ENCODE measurements at regions of chr12 and their contacts with region 1.

Region 1: GRCh38 chr12:47837190-47838171 is 17.8 kb upstream of the HDAC7 start:
- DNase-seq: peak in 1 of 2 experiments; percentile 86
- H3K4me3 ChIP-seq: no peak overlapping the region
- H3K27ac ChIP-seq: no peak overlapping the region
- H3K4me1 ChIP-seq: peaks cover 0 to 6% (median under 1%) of the 10 kb centered on the region in 4 experiments; a peak in 3 of 7 replicates
- H3K27me3 ChIP-seq: no peaks in the 10 kb centered on the region; a peak in 1 of 7 replicates
- CTCF ChIP-seq: peak; percentile 75 to 92 (median 83)
- EP300 ChIP-seq: no peak
- POLR2A ChIP-seq: no peak
- RAD21 ChIP-seq: peak; percentile 89 to 93

Region 2: DNA sequence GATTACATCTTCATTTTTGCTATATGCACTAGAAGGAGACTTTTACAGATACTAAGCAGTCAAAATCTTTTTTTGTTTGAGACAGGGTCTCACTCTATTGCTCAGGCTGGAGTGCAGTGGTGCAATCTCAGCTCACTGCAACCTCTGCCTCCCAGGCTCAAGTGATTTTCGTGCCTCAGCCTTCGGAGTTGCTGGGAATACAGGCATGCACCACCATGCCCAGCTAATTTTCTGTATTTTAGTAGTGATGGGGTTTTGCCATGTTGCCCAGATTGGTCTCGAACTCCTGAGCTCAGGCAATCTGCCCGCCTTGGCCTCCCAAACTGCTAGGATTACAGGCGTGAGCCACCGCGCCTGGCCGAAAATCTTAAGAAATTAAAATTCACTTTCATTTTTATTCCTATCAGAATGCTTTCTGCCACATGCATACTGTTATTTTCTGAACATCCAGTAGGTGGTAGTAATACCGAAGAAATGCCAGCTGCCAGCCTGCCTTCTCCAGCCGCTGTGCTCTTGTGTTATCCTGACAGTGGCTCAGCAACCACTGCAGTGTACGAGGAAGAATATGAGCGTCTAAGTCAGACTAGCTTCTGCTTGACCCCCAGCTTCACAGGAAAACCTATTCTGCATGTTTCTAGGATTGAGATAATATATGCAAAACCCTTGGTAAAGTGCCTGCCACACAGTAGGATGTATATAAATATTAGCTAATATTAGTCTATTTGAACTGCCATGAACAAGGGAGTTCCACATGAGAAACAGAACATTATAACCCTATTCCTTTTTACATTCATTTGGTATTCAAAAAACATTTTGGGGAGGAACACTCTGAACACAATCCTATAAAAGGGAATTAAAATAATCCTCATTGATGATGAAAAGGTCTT is 185.9 kb before region 1 on chr12:
- CTCF ChIA-PET with region 1: no interaction called
- POLR2A ChIA-PET with region 1: no interaction called
- DNase-seq: no peak
- H3K4me3 ChIP-seq: no peak overlapping the region
- H3K27ac ChIP-seq: no peak overlapping the region
- H3K4me1 ChIP-seq: peaks cover 2 to 6% (median 5%) of the 10 kb centered on the region in 4 experiments; a peak in 6 of 7 replicates
- H3K27me3 ChIP-seq: no peaks in the 10 kb centered on the region
- CTCF ChIP-seq: peak; percentile 27 to 75 (median 69)
- EP300 ChIP-seq: no peak
- POLR2A ChIP-seq: no peak
- RAD21 ChIP-seq: peak; percentile 79 to 82

Region 3: DNA sequence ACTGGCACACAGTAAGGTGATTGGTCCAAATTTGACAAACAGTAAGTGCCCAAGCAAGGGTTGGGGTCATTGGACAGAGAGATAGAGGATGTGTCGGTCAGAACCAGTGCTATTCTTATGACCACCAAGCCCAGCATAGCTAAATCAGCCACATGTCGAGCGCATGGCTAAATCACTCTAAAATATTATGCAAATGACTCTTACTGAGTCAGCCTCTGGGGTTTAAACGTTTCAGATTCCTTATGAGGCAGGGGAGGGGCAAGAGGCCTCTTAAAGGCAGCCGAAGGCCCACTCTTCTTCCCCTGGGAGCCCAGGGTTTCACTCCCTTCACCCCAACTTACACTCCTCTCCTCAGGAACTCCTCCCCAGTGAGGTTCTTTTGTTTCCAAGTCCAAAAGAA is 111.6 kb before region 1 on chr12:
- CTCF ChIA-PET with region 1: interaction called, 15 read pairs
- POLR2A ChIA-PET with region 1: no interaction called
- DNase-seq: no peak
- H3K4me3 ChIP-seq: no peak overlapping the region
- H3K27ac ChIP-seq: no peak overlapping the region
- H3K4me1 ChIP-seq: no peaks in the 10 kb centered on the region
- H3K27me3 ChIP-seq: no peaks in the 10 kb centered on the region
- CTCF ChIP-seq: no peak
- EP300 ChIP-seq: no peak
- POLR2A ChIP-seq: no peak
- RAD21 ChIP-seq: no peak

Region 4: GRCh38 chr12:47742253-47742825 is 95.1 kb before region 1 on chr12:
- CTCF ChIA-PET with region 1: interaction called, 296 read pairs
- POLR2A ChIA-PET with region 1: interaction called, 8 read pairs
- DNase-seq: peak in 1 of 2 experiments; percentile 97
- H3K4me3 ChIP-seq: no peak overlapping the region
- H3K27ac ChIP-seq: no peak overlapping the region
- H3K4me1 ChIP-seq: peaks cover 0 to 10% (median 2%) of the 10 kb centered on the region in 4 experiments; a peak in 4 of 7 replicates
- H3K27me3 ChIP-seq: no peaks in the 10 kb centered on the region
- CTCF ChIP-seq: peak in 2 of 3 experiments; percentile 93 to 98; a peak in 3 of 4 replicates
- EP300 ChIP-seq: no peak
- POLR2A ChIP-seq: no peak
- RAD21 ChIP-seq: peak; percentile 91 to 93

Region 5: DNA sequence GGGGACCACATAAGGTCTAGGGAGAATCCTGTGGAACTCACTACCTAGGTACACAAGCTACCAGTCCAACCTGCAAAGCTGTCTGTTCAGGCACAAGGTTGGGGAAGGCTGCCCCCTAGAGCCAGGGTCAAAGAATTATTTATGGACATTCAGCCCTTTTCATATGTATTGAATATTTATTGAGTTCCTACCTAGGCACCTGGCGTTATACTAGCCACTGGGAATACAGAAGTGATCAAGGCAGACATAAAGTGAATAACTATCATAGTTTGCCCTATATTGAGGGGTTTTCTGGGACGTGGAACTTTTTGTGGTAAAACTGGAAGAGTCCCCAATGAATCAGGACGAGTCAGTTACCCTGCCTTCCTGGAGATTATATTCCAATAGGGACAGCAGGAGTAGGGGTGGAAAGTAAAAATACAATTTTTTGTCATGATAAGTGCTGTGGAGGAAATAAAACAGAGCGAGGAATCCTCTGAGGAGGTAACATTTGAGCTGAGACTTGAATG is 70.2 kb before region 1 on chr12:
- CTCF ChIA-PET with region 1: interaction called, 2,001 read pairs
- POLR2A ChIA-PET with region 1: interaction called, 3 read pairs
- DNase-seq: peak in 1 of 2 experiments; percentile 77
- H3K4me3 ChIP-seq: no peak overlapping the region
- H3K27ac ChIP-seq: no peak overlapping the region
- H3K4me1 ChIP-seq: peaks cover 3 to 12% (median 9%) of the 10 kb centered on the region in 4 experiments; a peak in 5 of 7 replicates
- H3K27me3 ChIP-seq: no peaks in the 10 kb centered on the region; a peak in 1 of 7 replicates
- CTCF ChIP-seq: peak; percentile 63 to 89 (median 77)
- EP300 ChIP-seq: no peak
- POLR2A ChIP-seq: no peak
- RAD21 ChIP-seq: peak; percentile 83 to 87

Region 6: GRCh38 chr12:47812797-47813510 is 24.5 kb before region 1 on chr12:
- CTCF ChIA-PET with region 1: interaction called, 2,001 read pairs
- POLR2A ChIA-PET with region 1: interaction called, 480 read pairs
- DNase-seq: peak; percentile 81 to 83
- H3K4me3 ChIP-seq: peak overlapping the region; percentile 14 to 55 (median 40); a peak in 7 of 8 replicates
- H3K27ac ChIP-seq: peak overlapping the region; percentile 79
- H3K4me1 ChIP-seq: peaks cover 28 to 72% (median 58%) of the 10 kb centered on the region in 4 experiments
- H3K27me3 ChIP-seq: no peaks in the 10 kb centered on the region
- CTCF ChIP-seq: no peak
- EP300 ChIP-seq: peak in 1 of 2 experiments; percentile 77; a peak in 1 of 3 replicates
- POLR2A ChIP-seq: no peak
- RAD21 ChIP-seq: no peak

Region 7: DNA sequence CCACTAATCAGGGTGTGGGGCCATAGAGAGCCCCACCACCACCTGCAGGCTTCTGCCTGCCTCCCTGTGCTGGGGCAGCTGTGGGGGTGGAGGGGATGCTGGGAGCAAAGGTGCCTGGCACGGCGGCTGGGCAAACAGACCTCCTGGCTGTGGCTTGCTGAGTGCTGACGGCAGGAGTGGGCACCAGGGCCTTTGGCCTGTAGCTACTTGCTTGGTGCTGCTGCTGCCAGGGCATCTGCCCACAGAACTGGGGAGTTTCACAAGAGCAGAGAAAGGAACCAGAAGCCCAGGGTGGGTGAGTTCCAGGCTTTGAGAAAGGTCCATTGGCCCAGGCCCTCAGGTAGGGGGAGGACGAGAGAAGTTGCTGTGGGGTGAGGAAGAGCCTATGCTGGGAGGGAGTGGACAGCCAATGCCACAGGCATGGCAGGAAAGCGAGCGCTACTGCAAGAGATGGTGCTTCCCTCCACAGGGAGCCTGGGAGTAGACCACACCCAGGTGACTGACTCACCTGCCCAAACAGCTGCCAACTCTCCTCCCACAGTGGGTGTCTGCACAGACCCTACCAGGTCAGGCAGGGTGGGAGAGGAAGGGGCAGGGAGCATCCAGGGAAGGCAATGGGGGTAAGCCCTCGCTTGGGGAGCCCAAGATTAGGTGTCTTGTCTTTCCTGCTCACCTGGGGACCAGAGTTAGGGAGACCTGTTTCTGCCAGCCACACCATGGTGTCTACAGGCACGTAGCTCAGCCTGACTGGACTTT is 21.2 kb after region 1 on chr12:
- CTCF ChIA-PET with region 1: interaction called, 23 read pairs
- POLR2A ChIA-PET with region 1: interaction called, 3 read pairs
- DNase-seq: no peak
- H3K4me3 ChIP-seq: no peak overlapping the region
- H3K27ac ChIP-seq: no peak overlapping the region
- H3K4me1 ChIP-seq: no peaks in the 10 kb centered on the region
- H3K27me3 ChIP-seq: no peaks in the 10 kb centered on the region
- CTCF ChIP-seq: no peak
- EP300 ChIP-seq: no peak
- POLR2A ChIP-seq: no peak
- RAD21 ChIP-seq: no peak

Region 8: GRCh38 chr12:47894068-47894467 is 56.6 kb after region 1 on chr12:
- CTCF ChIA-PET with region 1: interaction called, 11 read pairs
- POLR2A ChIA-PET with region 1: no interaction called
- DNase-seq: no peak
- H3K4me3 ChIP-seq: no peak overlapping the region
- H3K27ac ChIP-seq: no peak overlapping the region
- H3K4me1 ChIP-seq: no peaks in the 10 kb centered on the region
- H3K27me3 ChIP-seq: peaks cover 0 to 6% (median 3%) of the 10 kb centered on the region in 4 experiments; a peak in 3 of 7 replicates
- CTCF ChIP-seq: no peak
- EP300 ChIP-seq: no peak
- POLR2A ChIP-seq: no peak
- RAD21 ChIP-seq: no peak

Region 9: DNA sequence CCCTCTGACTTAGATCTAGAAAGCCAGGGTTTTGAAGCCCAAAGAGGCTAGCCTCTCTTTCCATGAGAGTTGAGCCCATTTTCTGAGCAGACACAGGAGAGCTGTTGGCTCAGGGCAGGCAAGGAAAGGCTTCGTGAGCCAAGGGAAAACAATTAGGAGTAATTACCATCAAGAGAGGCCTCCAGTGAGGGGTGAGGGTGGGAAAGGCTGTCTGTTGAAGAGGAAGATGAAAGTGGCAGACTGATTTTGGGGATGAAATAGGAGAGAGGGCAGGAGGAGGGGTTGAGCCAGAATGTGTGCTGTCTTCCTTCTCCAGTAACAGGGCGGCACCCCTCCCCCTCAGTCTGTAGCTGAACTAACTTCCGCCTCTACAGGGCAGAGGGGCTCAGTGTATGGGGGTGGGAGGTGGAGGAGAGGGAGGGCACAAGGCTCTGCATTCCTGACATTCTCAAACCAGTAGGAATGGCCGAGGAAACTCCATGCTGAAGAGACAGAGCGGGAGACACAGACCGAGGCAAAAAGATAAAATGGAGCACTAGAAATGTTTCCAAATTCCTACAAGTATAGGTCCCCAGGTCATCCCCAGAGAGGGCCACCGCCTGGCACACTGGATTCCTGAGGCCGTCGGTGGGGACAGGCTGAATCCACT is 199.9 kb after region 1 on chr12:
- CTCF ChIA-PET with region 1: no interaction called
- POLR2A ChIA-PET with region 1: no interaction called
- DNase-seq: peak; percentile 84 to 87
- H3K4me3 ChIP-seq: peak overlapping the region in 2 of 4 experiments; percentile 26 to 46; a peak in 4 of 8 replicates
- H3K27ac ChIP-seq: peak overlapping the region; percentile 67
- H3K4me1 ChIP-seq: peaks cover 11 to 17% (median 14%) of the 10 kb centered on the region in 4 experiments
- H3K27me3 ChIP-seq: peaks cover 4 to 27% (median 18%) of the 10 kb centered on the region in 4 experiments; a peak in 5 of 7 replicates
- CTCF ChIP-seq: peak in 1 of 3 experiments; percentile 22; a peak in 1 of 4 replicates
- EP300 ChIP-seq: peak; percentile 14 to 90
- POLR2A ChIP-seq: peak in 1 of 2 experiments; percentile 77; a peak in 2 of 3 replicates
- RAD21 ChIP-seq: peak; percentile 22 to 32; a peak in 2 of 4 replicates